Activated T-helper 1 cell treated with anti-CD3 and anti-CD28 coated beads, Interleukin-12 subunit alpha, Interleukin-12 subunit beta, Interleukin-2, Interleukin-4 antibody, amounts not matched to agents 30 ng/mL and 10 ng/mL and 1 ng/mL, durations not matched to agents 14 hours and 24 hours and 36 hours (primary cell): ENCODE measurements at regions of chr1 and their contacts with region 1.

Region 1: GRCh38 chr1:23619299-23620188 is 60.2 kb upstream of the ID3 start:
- DNase-seq: peak; percentile 55
- H3K4me3 Mint-ChIP-seq: peak overlapping the region; percentile 67
- H3K27ac Mint-ChIP-seq: peak overlapping the region; percentile 69
- H3K4me1 Mint-ChIP-seq: peaks cover 72% of the 10 kb centered on the region
- H3K27me3 Mint-ChIP-seq: no peaks in the 10 kb centered on the region

Region 2: DNA sequence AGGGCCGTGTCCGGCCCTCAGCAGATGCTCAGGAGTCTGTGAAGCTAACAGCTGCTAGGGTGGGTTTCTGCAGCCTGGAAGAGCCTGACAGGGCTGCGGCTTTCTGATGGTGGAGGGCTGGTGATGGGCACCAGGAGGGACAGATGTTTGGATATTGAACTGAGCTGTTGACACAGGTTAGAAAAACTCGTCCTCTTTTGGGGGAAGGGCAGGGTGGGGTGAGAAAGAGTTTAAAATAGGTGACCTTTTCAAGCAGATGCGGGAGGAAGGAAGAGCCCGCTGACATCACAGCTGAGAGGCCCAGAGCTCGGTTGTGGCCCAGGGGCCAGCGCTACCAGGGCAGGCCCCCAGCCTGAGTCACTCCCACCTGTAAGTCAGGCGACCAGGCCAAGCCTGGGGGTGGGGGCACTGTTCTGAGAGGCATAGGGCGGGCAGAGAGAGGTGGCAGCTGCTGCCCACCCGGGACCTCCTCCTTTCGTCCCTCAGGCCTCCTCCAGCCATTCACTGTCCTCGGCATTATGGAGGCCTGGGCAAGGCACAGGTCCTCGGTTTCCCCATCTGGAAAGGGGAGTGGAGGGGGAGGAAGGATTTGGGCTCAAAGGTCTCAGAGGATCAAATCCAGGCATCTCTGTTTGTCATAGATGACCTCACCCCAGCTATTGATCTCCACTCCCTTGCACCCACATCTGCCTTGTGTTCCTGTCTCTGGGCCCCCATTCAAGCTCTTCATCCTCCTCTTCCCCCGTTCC is 27.9 kb before region 1 on chr1:
- intact Hi-C with region 1: loop called (anchors 1 kb)
- DNase-seq: no peak
- H3K4me3 Mint-ChIP-seq: peak overlapping the region; percentile 53
- H3K27ac Mint-ChIP-seq: peak overlapping the region; percentile 93
- H3K4me1 Mint-ChIP-seq: peaks cover 46% of the 10 kb centered on the region
- H3K27me3 Mint-ChIP-seq: peaks cover 2% of the 10 kb centered on the region

Region 3: GRCh38 chr1:24102961-24103360 is 483.4 kb after region 1 on chr1:
- intact Hi-C with region 1: no loop called
- DNase-seq: no peak
- H3K4me3 Mint-ChIP-seq: no peak overlapping the region
- H3K27ac Mint-ChIP-seq: no peak overlapping the region
- H3K4me1 Mint-ChIP-seq: no peaks in the 10 kb centered on the region
- H3K27me3 Mint-ChIP-seq: no peaks in the 10 kb centered on the region